PC-3 (cell line): ENCODE measurements at regions of chr3 and their contacts with region 1.

Region 1: GRCh38 chr3:179562591-179563270 is at the start of gene ACTL6A:
- DNase-seq: peak; percentile 100
- ATAC-seq: peak; percentile 94
- H3K4me3 ChIP-seq: peak within 1 kb of the TSS; percentile 89
- H3K27ac ChIP-seq: peak within 1 kb of the TSS; percentile 49
- H3K4me1 ChIP-seq: peaks cover 23% of the 10 kb centered on the region
- H3K27me3 ChIP-seq: no peaks in the 10 kb centered on the region
- CTCF ChIP-seq: no peak
- total RNA-seq, gene ACTL6A: 102 and 105 TPM in 2 replicates

Region 2: GRCh38 chr3:178966299-178967176 is 596.2 kb before region 1 on chr3:
- CTCF ChIA-PET with region 1: no interaction called
- POLR2A ChIA-PET with region 1: no interaction called
- intact Hi-C with region 1: loop called (anchors 5 kb)
- DNase-seq: peak; percentile 61
- ATAC-seq: peak; percentile 57
- H3K4me3 ChIP-seq: peak overlapping the region; percentile 26; the same call in 1 of the 2 replicates
- H3K27ac ChIP-seq: no peak overlapping the region
- H3K4me1 ChIP-seq: peaks cover 2% of the 10 kb centered on the region; the same call in 1 of the 2 replicates
- H3K27me3 ChIP-seq: peaks cover 4% of the 10 kb centered on the region; the same call in 1 of the 2 replicates
- CTCF ChIP-seq: peak; percentile 80

Region 3: DNA sequence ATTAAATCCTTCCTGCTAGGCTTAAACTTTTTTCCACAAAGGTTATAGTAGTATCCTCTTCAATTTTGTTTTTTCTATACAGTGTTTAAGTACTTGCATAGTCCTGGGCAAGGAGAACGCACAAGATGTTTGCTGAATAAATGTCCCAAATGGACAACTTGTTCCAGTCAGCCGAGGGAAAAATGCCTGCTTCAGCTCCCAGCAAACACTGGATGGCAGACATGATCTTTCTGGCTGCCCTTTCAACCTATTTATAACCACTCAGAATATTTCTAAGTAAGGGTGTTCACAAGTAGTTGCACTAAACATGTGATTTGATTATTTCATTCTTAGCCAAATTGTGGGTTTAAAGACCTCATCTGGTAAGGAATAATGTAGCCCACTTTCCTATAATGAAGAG is 141.2 kb before region 1 on chr3:
- CTCF ChIA-PET with region 1: no interaction called
- POLR2A ChIA-PET with region 1: no interaction called
- intact Hi-C with region 1: loop called (anchors 1 kb)
- DNase-seq: no peak
- ATAC-seq: peak; percentile 42; the same call in 1 of the 2 replicates
- H3K4me3 ChIP-seq: no peak overlapping the region
- H3K27ac ChIP-seq: no peak overlapping the region
- H3K4me1 ChIP-seq: no peaks in the 10 kb centered on the region
- H3K27me3 ChIP-seq: no peaks in the 10 kb centered on the region
- CTCF ChIP-seq: peak; percentile 45; the same call in 1 of the 2 replicates

Region 4: GRCh38 chr3:179446501-179446900 is 116.2 kb before region 1 on chr3:
- CTCF ChIA-PET with region 1: interaction called, 3 read pairs
- POLR2A ChIA-PET with region 1: no interaction called
- intact Hi-C with region 1: loop called (anchors 1 kb)
- DNase-seq: peak; percentile 58
- ATAC-seq: no peak
- H3K4me3 ChIP-seq: no peak overlapping the region
- H3K27ac ChIP-seq: no peak overlapping the region
- H3K4me1 ChIP-seq: no peaks in the 10 kb centered on the region
- H3K27me3 ChIP-seq: peaks cover 15% of the 10 kb centered on the region
- CTCF ChIP-seq: peak; percentile 57

Region 5: GRCh38 chr3:179451265-179452175 is 111.2 kb before region 1 on chr3 and contains the start of gene GNB4:
- CTCF ChIA-PET with region 1: interaction called, 3 read pairs
- POLR2A ChIA-PET with region 1: no interaction called
- intact Hi-C with region 1: loop called (anchors 1 kb)
- DNase-seq: peak; percentile 70
- ATAC-seq: peak; percentile 91
- H3K4me3 ChIP-seq: peak within 1 kb of the TSS; percentile 82
- H3K27ac ChIP-seq: no peak within 1 kb of the TSS
- H3K4me1 ChIP-seq: peaks cover 5% of the 10 kb centered on the region
- H3K27me3 ChIP-seq: peaks cover 47% of the 10 kb centered on the region
- CTCF ChIP-seq: no peak
- total RNA-seq, gene GNB4: 5.2 and 6.3 TPM in 2 replicates

Region 6: GRCh38 chr3:179604321-179605078 is 41.8 kb after region 1 on chr3 and contains the starts of genes MRPL47 and NDUFB5:
- CTCF ChIA-PET with region 1: interaction called, 3 read pairs
- POLR2A ChIA-PET with region 1: interaction called, 9 read pairs
- intact Hi-C with region 1: loop called (anchors 2 kb)
- DNase-seq: peak; percentile 97
- ATAC-seq: peak; percentile 100
- H3K4me3 ChIP-seq: peak within 1 kb of the TSS; percentile 90
- H3K27ac ChIP-seq: peak within 1 kb of the TSS; percentile 59
- H3K4me1 ChIP-seq: peaks cover 13% of the 10 kb centered on the region
- H3K27me3 ChIP-seq: no peaks in the 10 kb centered on the region
- CTCF ChIP-seq: no peak
- total RNA-seq, gene MRPL47: 68.0 and 77.0 TPM in 2 replicates
- total RNA-seq, gene NDUFB5: 125 and 126 TPM in 2 replicates

Region 7: DNA sequence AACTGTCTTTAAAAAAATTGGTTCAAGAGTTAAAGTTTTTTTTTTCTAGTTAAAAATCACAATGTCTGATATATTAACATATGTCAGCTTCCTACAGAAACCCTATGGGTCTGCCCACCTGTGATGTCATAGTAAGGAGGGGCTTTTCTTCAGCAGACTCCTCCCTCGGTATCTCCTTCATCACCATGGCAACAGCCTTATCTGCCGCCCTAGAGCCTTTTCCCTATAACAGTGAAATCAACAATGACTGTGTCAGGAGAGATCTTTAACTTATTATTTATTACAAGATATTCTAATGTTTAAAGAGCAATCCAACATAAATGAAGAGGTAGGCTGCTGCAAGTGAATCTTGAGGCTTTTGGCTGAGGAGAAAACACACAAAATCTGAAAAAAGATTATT is 335.3 kb after region 1 on chr3:
- CTCF ChIA-PET with region 1: no interaction called
- POLR2A ChIA-PET with region 1: no interaction called
- intact Hi-C with region 1: no loop called
- DNase-seq: peak; percentile 67
- ATAC-seq: peak; percentile 67
- H3K4me3 ChIP-seq: no peak overlapping the region
- H3K27ac ChIP-seq: no peak overlapping the region
- H3K4me1 ChIP-seq: no peaks in the 10 kb centered on the region
- H3K27me3 ChIP-seq: peaks cover 12% of the 10 kb centered on the region
- CTCF ChIP-seq: no peak